PC-3 (cell line): ENCODE measurements at regions of chr20 and their contacts with region 1.

Region 1: GRCh38 chr20:18252597-18253451 is 35.5 kb upstream of the ZNF133 start:
- DNase-seq: peak; percentile 99
- ATAC-seq: peak; percentile 94
- H3K4me3 ChIP-seq: peak overlapping the region; percentile 28; the same call in 1 of the 2 replicates
- H3K27ac ChIP-seq: peak overlapping the region; percentile 96
- H3K4me1 ChIP-seq: peaks cover 35% of the 10 kb centered on the region
- H3K27me3 ChIP-seq: no peaks in the 10 kb centered on the region
- CTCF ChIP-seq: no peak

Region 2: DNA sequence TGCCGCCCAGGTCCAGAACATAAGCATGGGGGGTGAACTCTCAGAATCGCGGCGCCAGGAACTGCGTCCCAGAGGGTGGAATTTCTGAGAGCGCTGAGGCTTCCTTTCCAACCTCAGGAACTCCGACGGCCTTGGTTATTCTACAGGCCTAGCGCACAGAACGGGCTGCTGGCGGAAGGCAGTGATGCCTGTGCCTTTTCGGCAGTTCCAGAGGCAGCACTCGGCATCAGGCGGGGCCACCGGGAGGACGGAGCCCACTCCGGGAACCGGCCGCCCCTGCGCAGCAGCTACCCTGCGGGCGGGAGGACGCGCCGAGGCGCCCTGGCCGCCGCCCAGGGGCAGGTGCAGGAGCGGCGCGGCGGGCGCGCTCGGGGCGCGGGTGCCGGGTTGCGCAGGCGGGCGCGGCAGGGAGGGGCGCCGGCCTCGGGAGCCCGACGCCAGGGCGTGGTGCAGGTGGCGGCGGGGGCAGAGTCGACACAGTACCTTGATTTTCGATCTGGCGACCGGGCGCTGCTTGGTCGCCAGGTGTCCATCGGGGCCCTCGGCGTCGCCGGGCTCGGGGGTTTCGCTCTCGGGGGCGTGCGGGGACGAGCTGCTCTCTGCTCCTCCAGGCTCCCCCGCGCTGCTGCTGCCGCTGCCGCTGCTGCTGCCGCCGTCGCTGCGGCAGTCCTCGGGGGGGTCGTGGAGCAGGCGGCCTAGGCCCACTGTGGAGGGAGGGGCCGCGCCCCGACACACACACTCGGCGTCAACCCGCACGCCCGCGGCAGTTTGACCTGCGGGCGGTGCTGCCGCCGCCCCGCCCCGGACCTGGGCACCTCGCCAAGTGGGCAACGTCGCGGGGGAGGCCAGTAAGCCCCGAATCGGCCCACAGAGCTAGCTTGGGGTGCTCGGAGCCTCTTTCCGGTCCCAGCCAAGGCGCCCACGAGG is 196.4 kb before region 1 on chr20:
- CTCF ChIA-PET with region 1: no interaction called
- POLR2A ChIA-PET with region 1: no interaction called
- intact Hi-C with region 1: loop called (anchors 5 kb)
- DNase-seq: peak; percentile 60
- ATAC-seq: peak; percentile 41
- H3K4me3 ChIP-seq: peak overlapping the region; percentile 90
- H3K27ac ChIP-seq: peak overlapping the region; percentile 4; the same call in 1 of the 2 replicates
- H3K4me1 ChIP-seq: peaks cover 29% of the 10 kb centered on the region
- H3K27me3 ChIP-seq: 0 out of 2 replicates have a peak, but pooled peaks cover 4% of the 10 kb centered on the region
- CTCF ChIP-seq: no peak

Region 3: GRCh38 chr20:18197382-18198131 is 55.3 kb before region 1 on chr20:
- CTCF ChIA-PET with region 1: interaction called, 12 read pairs
- POLR2A ChIA-PET with region 1: interaction called, 3 read pairs
- intact Hi-C with region 1: loop called (anchors 1 kb)
- DNase-seq: peak; percentile 97
- ATAC-seq: peak; percentile 94
- H3K4me3 ChIP-seq: peak overlapping the region; percentile 32; the same call in 1 of the 2 replicates
- H3K27ac ChIP-seq: peak overlapping the region; percentile 91
- H3K4me1 ChIP-seq: peaks cover 25% of the 10 kb centered on the region
- H3K27me3 ChIP-seq: no peaks in the 10 kb centered on the region
- CTCF ChIP-seq: peak; percentile 61

Region 4: GRCh38 chr20:18213002-18213401 is 39.8 kb before region 1 on chr20:
- CTCF ChIA-PET with region 1: no interaction called
- POLR2A ChIA-PET with region 1: no interaction called
- intact Hi-C with region 1: no loop called
- DNase-seq: peak; percentile 6
- ATAC-seq: no peak
- H3K4me3 ChIP-seq: no peak overlapping the region
- H3K27ac ChIP-seq: no peak overlapping the region
- H3K4me1 ChIP-seq: no peaks in the 10 kb centered on the region
- H3K27me3 ChIP-seq: no peaks in the 10 kb centered on the region
- CTCF ChIP-seq: no peak

Region 5: DNA sequence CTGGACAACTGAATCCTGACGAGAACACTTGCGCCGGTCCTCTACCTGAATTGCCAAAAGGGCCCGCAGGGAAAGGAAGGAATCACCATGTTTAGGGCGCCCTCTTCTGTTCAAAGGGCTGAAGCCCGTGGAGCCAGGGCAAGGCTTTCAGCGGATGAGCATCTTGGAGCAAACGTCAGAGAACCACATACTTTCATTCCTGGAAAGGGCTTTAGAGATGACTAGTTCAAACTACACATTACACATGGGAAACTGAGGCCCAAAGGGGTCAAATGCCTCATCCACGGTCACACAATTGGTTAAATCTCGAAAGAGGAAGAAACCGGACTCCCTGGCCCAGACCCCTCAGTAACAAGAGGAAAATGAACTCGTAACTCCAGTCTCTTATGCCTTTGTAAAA is 24.0 kb after region 1 on chr20:
- CTCF ChIA-PET with region 1: interaction called, 4 read pairs
- POLR2A ChIA-PET with region 1: no interaction called
- intact Hi-C with region 1: loop called (anchors 1 kb)
- DNase-seq: peak; percentile 95
- ATAC-seq: peak; percentile 96
- H3K4me3 ChIP-seq: peak overlapping the region; percentile 41; the same call in 1 of the 2 replicates
- H3K27ac ChIP-seq: no peak overlapping the region
- H3K4me1 ChIP-seq: peaks cover 9% of the 10 kb centered on the region; the same call in 1 of the 2 replicates
- H3K27me3 ChIP-seq: no peaks in the 10 kb centered on the region
- CTCF ChIP-seq: peak; percentile 97